PC-9 (cell line): ENCODE measurements at regions of chr7 and their contacts with region 1.

Region 1: GRCh38 chr7:2602406-2603043 is 29.3 kb upstream of the TTYH3 start:
- DNase-seq: peak in 1 of 2 experiments; percentile 22
- H3K4me3 ChIP-seq: no peak overlapping the region
- H3K27ac ChIP-seq: no peak overlapping the region
- H3K4me1 ChIP-seq: no peaks in the 10 kb centered on the region; the same call in 1 of the 2 replicates
- H3K27me3 ChIP-seq: no peaks in the 10 kb centered on the region
- CTCF ChIP-seq: no peak

Region 2: GRCh38 chr7:2175514-2175913 is 427.0 kb before region 1 on chr7:
- CTCF ChIA-PET with region 1: interaction called, 29 read pairs
- POLR2A ChIA-PET with region 1: no interaction called
- intact Hi-C with region 1: no loop called
- DNase-seq: peak; percentile 53 to 84
- H3K4me3 ChIP-seq: no peak overlapping the region
- H3K27ac ChIP-seq: no peak overlapping the region
- H3K4me1 ChIP-seq: no peaks in the 10 kb centered on the region
- H3K27me3 ChIP-seq: no peaks in the 10 kb centered on the region
- CTCF ChIP-seq: no peak

Region 3: GRCh38 chr7:2619116-2619515 is 16.6 kb after region 1 on chr7:
- CTCF ChIA-PET with region 1: interaction called, 18 read pairs
- POLR2A ChIA-PET with region 1: no interaction called
- intact Hi-C with region 1: no loop called
- DNase-seq: no peak
- H3K4me3 ChIP-seq: no peak overlapping the region
- H3K27ac ChIP-seq: no peak overlapping the region
- H3K4me1 ChIP-seq: no peaks in the 10 kb centered on the region
- H3K27me3 ChIP-seq: no peaks in the 10 kb centered on the region
- CTCF ChIP-seq: no peak

Region 4: GRCh38 chr7:2651336-2651735 is 48.8 kb after region 1 on chr7:
- CTCF ChIA-PET with region 1: no interaction called
- POLR2A ChIA-PET with region 1: no interaction called
- intact Hi-C with region 1: no loop called
- DNase-seq: no peak
- H3K4me3 ChIP-seq: no peak overlapping the region
- H3K27ac ChIP-seq: no peak overlapping the region
- H3K4me1 ChIP-seq: no peaks in the 10 kb centered on the region
- H3K27me3 ChIP-seq: no peaks in the 10 kb centered on the region
- CTCF ChIP-seq: no peak

Region 5: GRCh38 chr7:2668401-2668800 is 65.9 kb after region 1 on chr7:
- CTCF ChIA-PET with region 1: interaction called, 10 read pairs
- POLR2A ChIA-PET with region 1: no interaction called
- intact Hi-C with region 1: no loop called
- DNase-seq: peak; percentile 55
- H3K4me3 ChIP-seq: no peak overlapping the region
- H3K27ac ChIP-seq: no peak overlapping the region
- H3K4me1 ChIP-seq: 0 out of 2 replicates have a peak, but pooled peaks cover 5% of the 10 kb centered on the region
- H3K27me3 ChIP-seq: no peaks in the 10 kb centered on the region
- CTCF ChIP-seq: no peak